ENCODE measurements at regions of chr16 and their contacts with region 1.

Region 1: GRCh38 chr16:89815639-89816348 is 653 bp downstream of the FANCA start:
- DNase-seq: no peak
- ATAC-seq: peak; percentile 14
- H3K4me3 ChIP-seq: peak overlapping the region; percentile 37
- H3K4me3 Mint-ChIP-seq: peak overlapping the region; percentile 68 to 89 (median 80)
- H3K27ac ChIP-seq: peak overlapping the region; percentile 13
- H3K27ac Mint-ChIP-seq: peak overlapping the region in 1 of 9 donors; percentile 66
- H3K4me1 ChIP-seq: peaks cover 3 to 4% of the 10 kb centered on the region in 2 donors
- H3K4me1 Mint-ChIP-seq: peaks cover 10 to 29% (median 20%) of the 10 kb centered on the region in 7 donors
- H3K27me3 ChIP-seq: no peaks in the 10 kb centered on the region
- H3K27me3 Mint-ChIP-seq: no peaks in the 10 kb centered on the region

Region 2: GRCh38 chr16:89574681-89575246 is 241.0 kb before region 1 on chr16:
- CTCF ChIA-PET with region 1: no interaction called
- POLR2A ChIA-PET with region 1: no interaction called
- intact Hi-C with region 1: no loop called
- DNase-seq: peak in 4 of 9 donors; percentile 20 to 79 (median 42)
- ATAC-seq: peak; percentile 67
- H3K4me3 ChIP-seq: peak overlapping the region; percentile 24
- H3K4me3 Mint-ChIP-seq: peak overlapping the region in 9 of 10 donors; percentile 34 to 79 (median 64)
- H3K27ac ChIP-seq: no peak overlapping the region
- H3K27ac Mint-ChIP-seq: no peak overlapping the region
- H3K4me1 ChIP-seq: peaks cover 0 to 17% of the 10 kb centered on the region in 2 donors
- H3K4me1 Mint-ChIP-seq: peaks cover 8 to 29% (median 15%) of the 10 kb centered on the region in 7 donors
- H3K27me3 ChIP-seq: no peaks in the 10 kb centered on the region
- H3K27me3 Mint-ChIP-seq: peaks cover 3 to 33% (median 12%) of the 10 kb centered on the region in 5 donors

Region 3: GRCh38 chr16:89828199-89828778 is 12.5 kb after region 1 on chr16 and contains the start of gene SPIRE2:
- CTCF ChIA-PET with region 1: no interaction called
- POLR2A ChIA-PET with region 1: no interaction called
- intact Hi-C with region 1: loop called (anchors 1 kb)
- DNase-seq: peak; percentile 54 to 86 (median 73)
- ATAC-seq: peak; percentile 99
- H3K4me3 ChIP-seq: no peak within 1 kb of the TSS
- H3K4me3 Mint-ChIP-seq: peak within 1 kb of the TSS in 9 of 10 donors; percentile 46 to 70 (median 62)
- H3K27ac ChIP-seq: no peak within 1 kb of the TSS
- H3K27ac Mint-ChIP-seq: peak within 1 kb of the TSS in 1 of 9 donors; percentile 32
- H3K4me1 ChIP-seq: no peaks in the 10 kb centered on the region
- H3K4me1 Mint-ChIP-seq: peaks cover 2 to 10% (median 5%) of the 10 kb centered on the region in 7 donors
- H3K27me3 ChIP-seq: peaks cover 0 to 10% of the 10 kb centered on the region in 2 donors
- H3K27me3 Mint-ChIP-seq: peaks cover 12 to 37% (median 24%) of the 10 kb centered on the region in 5 donors
- total RNA-seq, gene SPIRE2: 1.2 to 3.5 (median 3.0) TPM

Region 4: DNA sequence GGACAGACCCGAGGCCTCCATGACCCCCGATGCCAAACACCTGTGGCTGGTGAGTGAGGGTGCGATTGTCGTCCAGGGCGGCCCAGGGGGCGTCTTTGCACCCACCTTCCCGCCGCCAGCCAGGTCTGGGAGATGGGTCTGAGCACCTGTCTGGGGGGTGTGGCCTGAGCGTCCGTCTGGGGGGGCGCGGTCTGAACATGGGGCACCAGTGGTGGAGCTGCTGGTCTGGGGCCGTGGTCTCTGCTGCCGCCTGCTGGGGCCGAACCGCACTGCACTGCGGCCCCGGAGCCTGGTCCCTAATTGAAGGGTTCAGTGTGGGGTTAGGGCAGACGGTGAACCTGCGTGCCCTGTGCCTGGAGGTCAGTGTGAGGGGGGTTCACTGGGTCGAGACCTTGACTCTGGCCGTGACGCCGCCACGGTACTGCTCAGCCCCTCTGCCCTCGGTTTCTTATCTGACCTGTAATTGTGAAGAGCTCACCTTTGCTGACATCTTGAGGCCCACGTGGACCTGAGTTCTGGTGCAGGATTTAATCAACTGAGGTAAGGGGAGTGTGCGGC is 45.0 kb after region 1 on chr16:
- CTCF ChIA-PET with region 1: no interaction called
- POLR2A ChIA-PET with region 1: interaction called, 3 read pairs
- intact Hi-C with region 1: loop called (anchors 2 kb)
- DNase-seq: peak; percentile 61 to 85 (median 70)
- ATAC-seq: peak; percentile 91
- H3K4me3 ChIP-seq: no peak overlapping the region
- H3K4me3 Mint-ChIP-seq: peak overlapping the region in 5 of 10 donors; percentile 1 to 41 (median 26)
- H3K27ac ChIP-seq: no peak overlapping the region
- H3K27ac Mint-ChIP-seq: peak overlapping the region in 8 of 9 donors; percentile 39 to 83 (median 70)
- H3K4me1 ChIP-seq: peaks cover 27 to 32% of the 10 kb centered on the region in 2 donors
- H3K4me1 Mint-ChIP-seq: peaks cover 32 to 42% (median 34%) of the 10 kb centered on the region in 7 donors
- H3K27me3 ChIP-seq: no peaks in the 10 kb centered on the region
- H3K27me3 Mint-ChIP-seq: no peaks in the 10 kb centered on the region

Region 5: GRCh38 chr16:89917773-89918452 is 102.1 kb after region 1 on chr16:
- CTCF ChIA-PET with region 1: no interaction called
- POLR2A ChIA-PET with region 1: no interaction called
- intact Hi-C with region 1: loop called in 1 of 2 experiments (anchors 2 kb)
- DNase-seq: peak; percentile 53 to 83 (median 67)
- ATAC-seq: peak; percentile 81
- H3K4me3 ChIP-seq: peak overlapping the region; percentile 43
- H3K4me3 Mint-ChIP-seq: peak overlapping the region; percentile 67 to 86 (median 73)
- H3K27ac ChIP-seq: no peak overlapping the region
- H3K27ac Mint-ChIP-seq: peak overlapping the region in 4 of 9 donors; percentile 44 to 87 (median 71)
- H3K4me1 ChIP-seq: peaks cover 20 to 25% of the 10 kb centered on the region in 2 donors
- H3K4me1 Mint-ChIP-seq: peaks cover 20 to 52% (median 38%) of the 10 kb centered on the region in 7 donors
- H3K27me3 ChIP-seq: peaks cover 0 to 6% of the 10 kb centered on the region in 2 donors
- H3K27me3 Mint-ChIP-seq: peaks cover 4 to 30% (median 17%) of the 10 kb centered on the region in 5 donors

Measured in naive thymus-derived CD4-positive, alpha-beta T cell (primary cell).